Cardiac septum (tissue), 1 donor: ENCODE measurements at regions of chr18 and their contacts with region 1.

Region 1: GRCh38 chr18:21341141-21341540 is 99.1 kb downstream of the GREB1L start:
- DNase-seq: no peak

Region 2: DNA sequence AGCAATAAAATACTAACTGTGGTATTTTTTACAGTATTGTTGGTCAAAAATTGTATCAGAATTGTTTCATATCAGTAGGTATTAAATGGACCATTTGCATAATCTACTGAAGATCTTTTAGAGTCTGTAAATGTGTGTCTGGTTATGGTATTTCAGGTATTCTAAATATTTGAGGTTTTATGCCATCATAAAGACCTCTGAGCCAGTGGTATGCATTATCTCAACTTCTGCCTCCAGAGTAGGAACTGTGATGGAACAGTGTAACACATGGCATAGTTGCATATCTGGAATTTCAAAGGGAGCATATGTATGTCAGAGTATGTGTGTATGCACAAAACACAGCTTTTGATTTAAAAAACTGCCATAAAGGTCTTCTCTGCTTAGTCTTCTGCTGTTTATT is 83.8 kb before region 1 on chr18:
- intact Hi-C with region 1: no loop called
- DNase-seq: no peak

Region 3: DNA sequence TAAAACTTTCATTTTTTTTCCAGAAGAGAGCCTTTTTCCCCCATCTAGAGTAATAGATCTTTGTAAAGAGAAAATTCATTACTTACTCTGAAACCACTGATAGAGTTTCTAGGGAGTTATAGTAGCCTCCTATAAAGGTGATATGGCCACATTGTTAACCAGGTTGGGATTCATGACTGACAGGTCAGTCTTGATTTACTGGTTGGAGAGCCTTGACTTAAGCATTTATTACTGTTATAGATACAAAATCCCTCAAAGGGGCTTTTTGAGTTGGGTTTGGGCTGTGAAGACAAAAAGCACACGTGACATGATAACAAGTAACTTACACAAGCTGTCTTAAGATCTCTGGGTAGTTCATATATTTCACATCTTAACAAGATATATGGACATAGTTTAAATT is 41.9 kb after region 1 on chr18:
- intact Hi-C with region 1: loop called (anchors 5 kb)
- DNase-seq: no peak

Region 4: DNA sequence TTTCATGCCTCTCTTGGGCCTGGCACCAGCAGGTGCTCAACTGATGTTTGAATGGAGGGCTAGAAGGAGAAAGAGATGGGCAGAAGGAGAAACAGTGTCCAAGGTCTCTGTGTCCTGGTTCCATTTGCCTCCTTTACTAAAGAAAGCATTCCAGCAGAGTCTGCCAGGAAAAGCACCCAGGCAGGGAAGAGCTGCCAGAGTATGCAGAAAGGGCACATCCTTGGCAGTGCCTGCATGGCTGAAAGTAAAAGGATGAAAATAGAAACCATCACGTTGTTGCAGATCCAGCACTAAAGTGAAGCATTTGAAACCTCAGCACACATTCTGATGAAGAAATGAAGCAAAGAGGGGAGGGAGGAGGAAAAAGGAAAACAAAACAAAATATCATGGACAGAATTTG is 117.2 kb after region 1 on chr18:
- intact Hi-C with region 1: no loop called
- DNase-seq: no peak